Activated CD4-positive, alpha-beta T cell treated with anti-CD3 and anti-CD28 coated beads, Interleukin-2, amount 10 ng/mL, durations not matched to agents 7 days and 5 days (primary cell): ENCODE measurements at regions of chr20 and their contacts with region 1.

Region 1: DNA sequence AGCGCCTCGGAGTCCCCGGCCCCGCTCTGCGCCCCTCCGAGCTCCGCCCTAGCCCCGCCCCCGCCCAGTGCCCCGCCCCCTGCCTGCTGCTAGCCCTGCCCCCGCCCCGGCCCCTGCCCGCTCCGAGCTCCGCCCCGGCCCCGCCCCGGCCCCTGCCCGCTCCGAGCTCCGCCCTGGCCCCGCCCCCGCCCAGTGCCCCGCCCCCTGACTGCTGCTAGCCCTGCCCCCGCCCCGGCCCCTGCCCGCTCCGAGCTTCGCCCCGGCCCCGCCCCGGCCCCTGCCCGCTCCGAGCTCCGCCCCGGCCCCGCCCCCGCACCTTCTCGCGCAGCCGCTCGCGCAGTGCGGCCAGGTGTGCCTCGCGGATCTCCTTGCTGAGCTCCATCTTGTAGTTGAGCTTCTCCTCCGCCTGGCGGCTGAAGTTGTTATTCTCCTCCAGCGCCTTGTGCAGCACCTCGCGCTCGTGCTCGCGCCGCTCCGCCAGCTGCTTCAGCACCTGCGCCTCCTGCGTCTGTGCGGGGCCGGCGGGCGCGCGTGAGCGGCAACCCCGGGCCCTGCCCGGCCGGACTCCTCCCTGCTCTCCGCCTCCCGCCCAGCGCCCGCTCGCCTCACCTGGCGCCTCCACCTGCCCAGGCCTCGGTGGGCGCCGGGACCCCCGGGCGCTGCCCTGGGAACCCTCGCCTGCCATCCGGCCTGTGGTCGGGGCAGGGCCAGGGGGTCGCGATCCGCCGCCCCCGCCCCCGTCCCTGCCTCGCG is 11.3 kb downstream of the STMN3 start:
- DNase-seq: peak; percentile 96
- H3K4me3 Mint-ChIP-seq: peak overlapping the region; percentile 74
- H3K27ac Mint-ChIP-seq: peak overlapping the region; percentile 88
- H3K4me1 Mint-ChIP-seq: peaks cover 25% of the 10 kb centered on the region
- H3K27me3 Mint-ChIP-seq: no peaks in the 10 kb centered on the region

Region 2: DNA sequence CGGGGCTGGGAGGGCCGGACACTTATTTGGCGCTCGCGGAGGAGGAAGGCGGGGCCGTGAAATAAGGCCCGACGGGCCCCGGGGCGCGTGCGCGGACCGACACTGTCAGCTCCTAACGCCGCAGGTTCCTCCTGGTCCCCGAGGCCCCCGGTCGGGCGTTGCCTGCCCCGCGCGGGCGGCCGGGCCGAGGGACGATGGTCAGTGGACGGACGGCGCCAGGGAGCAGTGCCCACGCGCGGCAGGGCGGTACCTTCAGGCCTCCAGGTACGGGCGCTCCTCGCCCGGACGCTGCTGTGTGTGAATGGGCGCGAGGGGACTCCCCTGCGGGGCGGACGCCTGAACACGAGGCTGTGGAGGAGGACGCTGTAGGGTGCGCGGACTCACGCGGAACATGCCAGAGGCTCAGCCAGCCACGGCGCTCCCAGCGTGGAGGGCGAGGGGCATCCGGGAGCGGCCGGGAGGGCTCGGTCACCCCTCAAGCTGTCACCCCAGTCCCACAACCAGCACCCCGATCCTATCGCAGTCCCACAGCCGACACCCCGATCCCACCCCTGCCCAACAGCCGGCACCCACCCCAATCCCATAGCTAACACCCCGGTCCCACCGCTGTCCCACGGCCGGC is 14.7 kb before region 1 on chr20:
- CTCF ChIA-PET with region 1: interaction called, 10 read pairs
- POLR2A ChIA-PET with region 1: interaction called, 5 read pairs
- DNase-seq: peak; percentile 94
- H3K4me3 Mint-ChIP-seq: peak overlapping the region; percentile 94
- H3K27ac Mint-ChIP-seq: peak overlapping the region; percentile 95
- H3K4me1 Mint-ChIP-seq: peaks cover 48% of the 10 kb centered on the region
- H3K27me3 Mint-ChIP-seq: no peaks in the 10 kb centered on the region

Region 3: GRCh38 chr20:63653078-63653973 is 11.4 kb after region 1 on chr20 and contains the start of gene STMN3:
- CTCF ChIA-PET with region 1: interaction called, 16 read pairs
- POLR2A ChIA-PET with region 1: no interaction called
- DNase-seq: peak; percentile 82
- H3K4me3 Mint-ChIP-seq: peak within 1 kb of the TSS; percentile 71
- H3K27ac Mint-ChIP-seq: peak within 1 kb of the TSS; percentile 70
- H3K4me1 Mint-ChIP-seq: peaks cover 25% of the 10 kb centered on the region
- H3K27me3 Mint-ChIP-seq: peaks cover 5% of the 10 kb centered on the region
- total RNA-seq, gene STMN3: 49.4 to 54.4 TPM